Endothelial cell of umbilical vein (primary cell): ENCODE measurements at regions of chr7 and their contacts with region 1.

Region 1: GRCh38 chr7:74026903-74027551 is 946 bp upstream of the ELN start:
- DNase-seq: peak; percentile 72
- H3K4me3 ChIP-seq: no peak overlapping the region
- H3K27ac ChIP-seq: no peak overlapping the region
- H3K4me1 ChIP-seq: peaks cover 19% of the 10 kb centered on the region
- H3K27me3 ChIP-seq: peaks cover 11 to 17% of the 10 kb centered on the region in 2 experiments
- CTCF ChIP-seq: peak; percentile 91 to 95
- POLR2A ChIP-seq: no peak

Region 2: DNA sequence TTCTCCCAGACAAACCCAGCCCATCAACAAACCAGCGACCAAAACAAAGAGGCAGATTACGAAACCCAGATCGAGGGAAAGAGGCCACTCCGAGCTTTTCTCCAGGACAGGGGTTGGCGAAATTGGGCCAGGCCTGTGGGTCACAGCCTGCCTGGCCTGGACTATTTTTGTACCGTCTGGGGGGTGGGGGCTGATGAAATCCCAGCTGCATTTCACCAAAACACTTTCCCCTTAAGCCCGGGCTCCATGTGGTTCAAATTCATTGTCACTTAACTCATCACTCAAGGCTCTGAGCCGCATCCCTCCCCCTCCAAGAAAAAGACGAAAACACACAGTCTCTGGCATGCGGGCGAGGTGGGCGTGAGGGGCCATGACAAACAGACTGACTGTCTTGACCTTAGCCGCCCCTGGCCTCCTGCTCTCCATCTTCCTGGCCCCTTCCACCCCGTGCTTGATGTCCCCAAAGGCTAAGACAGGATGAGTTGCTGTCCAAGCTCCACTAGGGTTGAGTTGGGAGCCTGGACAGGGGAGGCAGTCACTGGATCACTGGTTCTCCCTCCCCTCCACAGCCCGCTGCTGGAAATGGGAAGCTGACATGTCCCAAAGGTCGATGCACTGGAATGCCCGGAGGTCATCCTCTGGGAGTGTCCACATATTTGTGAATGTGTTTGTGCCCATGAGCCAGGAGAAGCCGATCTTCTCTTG is 146.9 kb before region 1 on chr7:
- CTCF ChIA-PET with region 1: interaction called, 33 read pairs
- POLR2A ChIA-PET with region 1: no interaction called
- dilution Hi-C with region 1: no loop called
- intact Hi-C with region 1: loop called (anchors 5 kb)
- DNase-seq: no peak
- H3K4me3 ChIP-seq: no peak overlapping the region
- H3K27ac ChIP-seq: no peak overlapping the region
- H3K4me1 ChIP-seq: peaks cover 9% of the 10 kb centered on the region
- H3K27me3 ChIP-seq: peaks cover 8 to 31% of the 10 kb centered on the region in 2 experiments
- CTCF ChIP-seq: no peak
- POLR2A ChIP-seq: no peak

Region 3: GRCh38 chr7:73941836-73942551 is 85.0 kb before region 1 on chr7:
- CTCF ChIA-PET with region 1: interaction called, 6 read pairs
- POLR2A ChIA-PET with region 1: no interaction called
- dilution Hi-C with region 1: no loop called
- intact Hi-C with region 1: loop called (anchors 5 kb)
- DNase-seq: peak; percentile 85
- H3K4me3 ChIP-seq: no peak overlapping the region
- H3K27ac ChIP-seq: peak overlapping the region; percentile 35
- H3K4me1 ChIP-seq: peaks cover 10% of the 10 kb centered on the region
- H3K27me3 ChIP-seq: no peaks in the 10 kb centered on the region
- CTCF ChIP-seq: no peak
- POLR2A ChIP-seq: no peak

Region 4: GRCh38 chr7:73978661-73979563 is 48.1 kb before region 1 on chr7:
- CTCF ChIA-PET with region 1: interaction called, 23 read pairs
- POLR2A ChIA-PET with region 1: no interaction called
- dilution Hi-C with region 1: no loop called
- intact Hi-C with region 1: no loop called
- DNase-seq: peak; percentile 24
- H3K4me3 ChIP-seq: no peak overlapping the region
- H3K27ac ChIP-seq: no peak overlapping the region
- H3K4me1 ChIP-seq: no peaks in the 10 kb centered on the region
- H3K27me3 ChIP-seq: no peaks in the 10 kb centered on the region
- CTCF ChIP-seq: peak; percentile 31 to 50
- POLR2A ChIP-seq: no peak

Region 5: GRCh38 chr7:74012842-74013249 is 14.2 kb before region 1 on chr7:
- CTCF ChIA-PET with region 1: interaction called, 16 read pairs
- POLR2A ChIA-PET with region 1: no interaction called
- dilution Hi-C with region 1: no loop called
- intact Hi-C with region 1: no loop called
- DNase-seq: peak; percentile 24
- H3K4me3 ChIP-seq: no peak overlapping the region
- H3K27ac ChIP-seq: no peak overlapping the region
- H3K4me1 ChIP-seq: no peaks in the 10 kb centered on the region
- H3K27me3 ChIP-seq: no peaks in the 10 kb centered on the region
- CTCF ChIP-seq: no peak
- POLR2A ChIP-seq: no peak

Region 6: DNA sequence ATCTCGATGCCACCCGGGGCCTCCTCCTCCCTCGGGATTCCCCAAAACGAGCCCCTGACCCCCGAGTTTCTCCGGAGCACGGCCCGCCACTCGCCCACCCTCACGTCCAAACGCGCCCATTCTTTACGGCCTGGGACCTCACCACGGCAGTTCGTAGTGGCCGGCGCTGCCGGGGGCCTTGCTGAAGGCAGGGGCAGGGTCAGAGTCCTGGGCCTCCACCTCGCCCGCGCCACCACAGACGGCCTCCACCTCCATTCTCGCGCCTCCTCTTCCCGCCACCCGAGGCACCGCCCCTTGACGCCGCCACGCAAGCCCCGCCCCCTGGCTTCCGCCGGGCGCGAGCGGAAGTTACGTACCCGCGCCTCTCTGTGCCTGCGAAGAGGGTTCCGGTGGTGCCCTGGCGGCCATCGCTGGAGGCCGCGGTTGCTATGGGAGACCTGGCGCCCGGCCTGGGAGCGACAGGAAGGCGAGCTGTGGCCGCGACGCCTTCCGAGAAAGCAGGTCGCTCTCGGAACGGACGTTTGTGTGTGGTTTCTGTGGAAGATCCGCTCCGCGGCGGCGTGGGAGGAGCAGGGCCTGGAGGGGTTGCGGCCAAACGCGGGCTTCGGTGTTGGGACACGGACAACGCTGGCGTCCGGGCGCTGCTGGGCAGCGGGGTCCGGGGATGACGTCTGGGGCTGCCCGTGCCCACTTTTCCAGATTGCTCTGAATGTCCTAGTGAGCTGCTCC is 227.3 kb after region 1 on chr7 and contains the start of gene RFC2:
- CTCF ChIA-PET with region 1: no interaction called
- POLR2A ChIA-PET with region 1: no interaction called
- dilution Hi-C with region 1: no loop called
- intact Hi-C with region 1: no loop called
- DNase-seq: peak; percentile 98
- H3K4me3 ChIP-seq: peak within 1 kb of the TSS; percentile 75 to 89 (median 78)
- H3K27ac ChIP-seq: peak within 1 kb of the TSS; percentile 79
- H3K4me1 ChIP-seq: peaks cover 22% of the 10 kb centered on the region
- H3K27me3 ChIP-seq: no peaks in the 10 kb centered on the region
- CTCF ChIP-seq: peak in 1 of 2 donors; percentile 28
- POLR2A ChIP-seq: peak; percentile 38
- total RNA-seq, gene RFC2: 40.0 and 44.3 TPM in 2 replicates